Activated naive CD4-positive, alpha-beta T cell treated with anti-CD3 and anti-CD28 coated beads for 36 hours (primary cell): ENCODE measurements at regions of chr20 and their contacts with region 1.

Region 1: DNA sequence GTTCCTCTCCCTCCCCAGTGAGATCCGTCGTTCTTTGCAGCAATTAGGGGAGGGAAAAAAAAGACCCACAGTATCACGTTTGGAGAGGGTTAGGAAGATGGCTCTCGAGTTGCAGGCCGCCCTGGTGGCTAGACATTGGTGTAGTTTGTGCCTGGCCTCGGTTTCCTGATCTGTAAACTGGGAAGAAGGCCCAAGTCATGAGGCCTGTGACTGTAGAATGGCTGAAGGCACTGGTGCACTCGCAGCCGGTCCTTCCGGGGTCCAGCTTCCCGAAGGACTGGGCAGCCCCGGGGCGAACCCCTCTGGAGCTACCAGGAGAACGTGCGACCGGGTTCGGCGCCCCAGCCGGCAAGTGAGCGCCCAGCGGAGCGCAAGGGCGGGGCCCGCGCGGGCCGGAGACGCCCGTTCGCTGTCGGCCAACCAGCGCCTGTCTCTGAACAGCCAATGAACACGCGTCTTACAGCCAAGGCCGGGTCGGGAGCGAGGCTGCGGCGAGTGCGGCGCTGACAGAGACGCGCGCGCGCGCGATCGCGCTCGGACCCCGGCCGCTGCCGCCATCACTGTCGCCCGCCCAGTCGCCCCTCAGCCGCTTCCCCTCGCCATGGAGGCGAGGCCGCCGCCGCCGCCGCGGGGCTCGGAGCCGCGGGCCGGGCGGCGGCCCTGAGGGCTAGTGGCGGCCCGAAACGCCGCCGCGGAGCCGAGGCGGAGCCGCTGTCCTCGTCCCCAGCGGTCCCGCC is at the start of gene PTPRA:
- DNase-seq: peak; percentile 95
- H3K4me3 Mint-ChIP-seq: peak within 1 kb of the TSS; percentile 89
- H3K27ac Mint-ChIP-seq: peak within 1 kb of the TSS; percentile 88
- H3K4me1 Mint-ChIP-seq: peaks cover 46% of the 10 kb centered on the region
- H3K27me3 Mint-ChIP-seq: no peaks in the 10 kb centered on the region
- total RNA-seq, gene PTPRA: 31.7 to 32.7 TPM

Region 2: GRCh38 chr20:2507875-2508630 is 365.1 kb before region 1 on chr20:
- CTCF ChIA-PET with region 1: no interaction called
- intact Hi-C with region 1: no loop called
- DNase-seq: no peak
- H3K4me3 Mint-ChIP-seq: peak overlapping the region; percentile 99
- H3K27ac Mint-ChIP-seq: peak overlapping the region; percentile 90
- H3K4me1 Mint-ChIP-seq: peaks cover 21% of the 10 kb centered on the region
- H3K27me3 Mint-ChIP-seq: peaks cover 3% of the 10 kb centered on the region

Region 3: GRCh38 chr20:2840138-2840966 is 32.8 kb before region 1 on chr20 and contains the starts of genes PCED1A and VPS16:
- CTCF ChIA-PET with region 1: interaction called, 3 read pairs
- intact Hi-C with region 1: loop called (anchors 1 kb)
- DNase-seq: peak; percentile 88
- H3K4me3 Mint-ChIP-seq: peak within 1 kb of the TSS; percentile 78
- H3K27ac Mint-ChIP-seq: peak within 1 kb of the TSS; percentile 73
- H3K4me1 Mint-ChIP-seq: peaks cover 37% of the 10 kb centered on the region
- H3K27me3 Mint-ChIP-seq: no peaks in the 10 kb centered on the region
- total RNA-seq, gene PCED1A: 44.6 to 44.8 TPM
- total RNA-seq, gene VPS16: 39.0 to 42.0 TPM

Region 4: GRCh38 chr20:2899243-2899642 is 26.1 kb after region 1 on chr20:
- CTCF ChIA-PET with region 1: no interaction called
- intact Hi-C with region 1: loop called (anchors 1 kb)
- DNase-seq: peak; percentile 75
- H3K4me3 Mint-ChIP-seq: no peak overlapping the region
- H3K27ac Mint-ChIP-seq: no peak overlapping the region
- H3K4me1 Mint-ChIP-seq: peaks cover 41% of the 10 kb centered on the region
- H3K27me3 Mint-ChIP-seq: no peaks in the 10 kb centered on the region

Region 5: DNA sequence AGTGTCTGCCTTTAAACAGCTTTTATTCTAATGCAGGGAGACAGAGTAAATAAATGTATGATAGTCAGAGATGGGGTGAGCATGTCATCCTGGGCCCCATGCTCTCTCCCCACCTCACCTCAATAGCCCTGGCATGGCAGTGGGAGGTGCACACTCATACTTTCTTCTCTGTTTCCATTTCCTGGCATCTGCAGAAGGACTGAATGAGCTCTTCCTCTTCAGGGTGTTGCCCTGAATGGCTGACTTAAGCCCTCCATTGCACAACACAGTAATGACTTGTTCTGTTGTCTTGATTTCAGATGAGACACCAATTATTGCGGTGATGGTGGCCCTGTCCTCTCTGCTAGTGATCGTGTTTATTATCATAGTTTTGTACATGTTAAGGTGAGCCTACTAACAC is 113.3 kb after region 1 on chr20:
- CTCF ChIA-PET with region 1: interaction called, 4 read pairs
- intact Hi-C with region 1: loop called (anchors 1 kb)
- DNase-seq: peak; percentile 84
- H3K4me3 Mint-ChIP-seq: peak overlapping the region; percentile 2
- H3K27ac Mint-ChIP-seq: peak overlapping the region; percentile 89
- H3K4me1 Mint-ChIP-seq: peaks cover 2% of the 10 kb centered on the region
- H3K27me3 Mint-ChIP-seq: no peaks in the 10 kb centered on the region

Region 6: GRCh38 chr20:3045816-3046676 is 172.9 kb after region 1 on chr20 and contains the start of gene MRPS26:
- CTCF ChIA-PET with region 1: no interaction called
- intact Hi-C with region 1: loop called (anchors 1 kb)
- DNase-seq: peak; percentile 84
- H3K4me3 Mint-ChIP-seq: peak within 1 kb of the TSS; percentile 83
- H3K27ac Mint-ChIP-seq: peak within 1 kb of the TSS; percentile 60
- H3K4me1 Mint-ChIP-seq: peaks cover 23% of the 10 kb centered on the region
- H3K27me3 Mint-ChIP-seq: no peaks in the 10 kb centered on the region
- total RNA-seq, gene MRPS26: 50.0 to 52.4 TPM

Region 7: GRCh38 chr20:3080939-3081388 is 207.8 kb after region 1 on chr20:
- CTCF ChIA-PET with region 1: no interaction called
- intact Hi-C with region 1: no loop called
- DNase-seq: no peak
- H3K4me3 Mint-ChIP-seq: no peak overlapping the region
- H3K27ac Mint-ChIP-seq: no peak overlapping the region
- H3K4me1 Mint-ChIP-seq: peaks cover 18% of the 10 kb centered on the region
- H3K27me3 Mint-ChIP-seq: peaks cover 30% of the 10 kb centered on the region

Region 8: GRCh38 chr20:3204124-3204822 is 331.1 kb after region 1 on chr20 and contains the start of gene DDRGK1:
- CTCF ChIA-PET with region 1: no interaction called
- intact Hi-C with region 1: loop called (anchors 5 kb)
- DNase-seq: peak; percentile 96
- H3K4me3 Mint-ChIP-seq: peak within 1 kb of the TSS; percentile 97
- H3K27ac Mint-ChIP-seq: peak within 1 kb of the TSS; percentile 97
- H3K4me1 Mint-ChIP-seq: peaks cover 18% of the 10 kb centered on the region
- H3K27me3 Mint-ChIP-seq: no peaks in the 10 kb centered on the region
- total RNA-seq, gene DDRGK1: 78.2 to 79.5 TPM